PC-3 (cell line): ENCODE measurements at regions of chr15 and their contacts with region 1.

Region 1: DNA sequence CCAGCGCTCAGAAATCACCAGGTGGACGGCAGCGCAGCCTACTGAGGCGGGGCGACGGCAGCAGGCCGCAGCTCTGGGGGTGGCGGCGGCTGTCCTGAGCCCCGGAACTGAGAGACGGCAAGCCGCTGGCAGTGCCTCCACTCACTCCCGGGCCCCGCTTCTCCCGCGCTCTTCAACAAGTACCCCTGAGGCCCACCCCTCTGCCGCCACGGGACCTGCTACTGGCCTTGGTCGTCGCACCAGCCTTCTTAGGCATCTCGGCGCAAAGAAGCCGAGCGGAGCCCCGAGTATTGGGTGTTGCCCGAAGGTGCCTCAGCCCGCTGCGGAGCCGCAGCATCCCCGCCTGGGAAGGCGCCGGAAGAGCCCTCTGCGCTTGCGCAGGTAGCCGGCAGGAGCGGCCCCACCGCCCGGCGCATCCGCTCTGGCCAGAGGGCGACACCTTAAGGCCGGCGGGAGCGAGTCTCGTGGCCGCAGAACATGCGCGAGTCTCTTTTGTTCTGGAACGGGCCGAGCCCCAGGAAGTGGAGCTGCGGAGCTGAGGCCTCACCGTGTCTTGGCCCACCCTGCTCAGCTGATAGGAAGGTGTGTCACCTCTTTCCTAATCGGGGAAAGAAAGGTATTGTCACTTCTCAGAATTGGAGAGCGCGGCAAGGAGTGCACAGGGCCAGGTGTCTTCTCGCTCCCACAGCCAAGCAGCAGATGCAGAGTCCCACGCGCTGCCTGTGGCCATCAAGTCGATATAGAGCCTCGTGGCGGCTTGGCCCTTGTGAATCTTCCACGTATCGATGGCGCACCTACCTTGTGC is at the start of gene C15orf40:
- DNase-seq: peak; percentile 90
- ATAC-seq: peak; percentile 89
- H3K4me3 ChIP-seq: peak within 1 kb of the TSS; percentile 92
- H3K27ac ChIP-seq: peak within 1 kb of the TSS; percentile 44
- H3K4me1 ChIP-seq: peaks cover 20% of the 10 kb centered on the region
- H3K27me3 ChIP-seq: no peaks in the 10 kb centered on the region
- CTCF ChIP-seq: peak; percentile 72
- total RNA-seq, gene C15orf40: 10.3 and 25.8 TPM in 2 replicates

Region 2: GRCh38 chr15:83230258-83230657 is 218.8 kb after region 1 on chr15:
- CTCF ChIA-PET with region 1: interaction called, 11 read pairs
- POLR2A ChIA-PET with region 1: no interaction called
- intact Hi-C with region 1: no loop called
- DNase-seq: no peak
- ATAC-seq: no peak
- H3K4me3 ChIP-seq: no peak overlapping the region
- H3K27ac ChIP-seq: no peak overlapping the region
- H3K4me1 ChIP-seq: no peaks in the 10 kb centered on the region
- H3K27me3 ChIP-seq: no peaks in the 10 kb centered on the region
- CTCF ChIP-seq: no peak